ENCODE measurements at regions of chr2 and their contacts with region 1.

Region 1: DNA sequence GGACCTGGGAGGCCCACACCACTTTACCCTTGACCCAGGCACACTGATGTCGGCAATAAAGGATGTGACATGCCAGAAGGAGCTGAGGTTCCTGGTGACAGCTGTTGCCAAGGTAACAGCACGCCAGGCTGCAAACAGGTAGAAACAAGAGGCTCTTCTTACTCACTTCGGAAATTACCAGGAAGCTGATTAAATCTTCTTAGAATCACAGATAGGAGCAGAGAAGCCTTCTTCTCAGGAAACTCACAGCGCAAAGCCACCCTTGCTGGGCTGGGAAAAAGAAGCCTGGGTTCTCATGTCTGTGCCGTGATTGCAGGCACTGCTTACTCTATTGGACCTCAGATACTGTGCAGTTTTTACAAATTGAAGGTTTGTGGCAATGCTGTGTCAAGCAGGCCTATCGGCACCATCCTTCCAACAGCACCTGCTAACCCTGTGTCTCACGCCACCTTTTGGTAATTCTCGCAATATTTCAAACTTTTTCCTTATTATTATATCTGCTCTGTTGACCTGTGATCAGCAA is 61.0 kb upstream of the TAF1B start:
- DNase-seq: peak; percentile 88
- H3K4me3 ChIP-seq: no peak overlapping the region
- H3K27ac ChIP-seq: peak overlapping the region; percentile 79
- H3K4me1 ChIP-seq: peaks cover 28% of the 10 kb centered on the region
- H3K27me3 ChIP-seq: no peaks in the 10 kb centered on the region
- CTCF ChIP-seq: no peak

Region 2: DNA sequence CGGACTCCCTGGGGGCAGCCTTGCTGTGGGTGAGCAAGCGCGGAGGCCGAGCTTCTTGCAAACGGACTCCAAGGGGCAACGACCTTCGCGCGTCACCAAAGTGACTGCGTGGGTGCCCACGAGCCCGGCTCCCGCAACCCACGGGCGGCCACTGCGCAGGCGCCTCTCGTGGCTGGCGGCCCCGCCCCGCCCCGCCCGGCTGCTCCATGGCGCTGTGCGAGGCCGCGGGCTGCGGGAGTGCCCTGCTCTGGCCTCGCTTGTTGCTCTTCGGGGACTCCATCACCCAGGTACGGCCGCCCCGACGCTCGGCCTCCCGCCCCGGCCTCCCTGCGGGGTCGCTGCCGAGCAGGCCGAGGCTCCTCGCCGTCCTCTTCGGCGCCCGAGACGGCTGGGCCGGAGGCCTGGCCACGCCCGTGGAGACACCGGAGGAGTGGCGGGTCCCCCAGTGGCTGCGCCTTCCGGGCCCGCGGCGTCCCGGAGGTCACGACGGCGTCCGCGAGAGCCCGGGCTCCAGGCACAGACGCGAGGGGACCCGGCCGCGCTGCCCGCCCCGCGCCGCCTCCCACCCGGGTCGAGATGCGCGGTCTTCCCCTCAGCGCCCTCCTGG is 307.8 kb before region 1 on chr2 and contains the start of gene IAH1:
- CTCF ChIA-PET with region 1: no interaction called
- dilution Hi-C with region 1: no loop called
- in situ Hi-C with region 1: no loop called
- intact Hi-C with region 1: loop called (anchors 2 kb)
- DNase-seq: peak; percentile 49
- H3K4me3 ChIP-seq: peak within 1 kb of the TSS; percentile 42 to 66 (median 65)
- H3K27ac ChIP-seq: peak within 1 kb of the TSS; percentile 54
- H3K4me1 ChIP-seq: peaks cover 11% of the 10 kb centered on the region
- H3K27me3 ChIP-seq: no peaks in the 10 kb centered on the region
- CTCF ChIP-seq: no peak
- total RNA-seq, gene IAH1: 26.3 to 53.1 TPM

Region 3: DNA sequence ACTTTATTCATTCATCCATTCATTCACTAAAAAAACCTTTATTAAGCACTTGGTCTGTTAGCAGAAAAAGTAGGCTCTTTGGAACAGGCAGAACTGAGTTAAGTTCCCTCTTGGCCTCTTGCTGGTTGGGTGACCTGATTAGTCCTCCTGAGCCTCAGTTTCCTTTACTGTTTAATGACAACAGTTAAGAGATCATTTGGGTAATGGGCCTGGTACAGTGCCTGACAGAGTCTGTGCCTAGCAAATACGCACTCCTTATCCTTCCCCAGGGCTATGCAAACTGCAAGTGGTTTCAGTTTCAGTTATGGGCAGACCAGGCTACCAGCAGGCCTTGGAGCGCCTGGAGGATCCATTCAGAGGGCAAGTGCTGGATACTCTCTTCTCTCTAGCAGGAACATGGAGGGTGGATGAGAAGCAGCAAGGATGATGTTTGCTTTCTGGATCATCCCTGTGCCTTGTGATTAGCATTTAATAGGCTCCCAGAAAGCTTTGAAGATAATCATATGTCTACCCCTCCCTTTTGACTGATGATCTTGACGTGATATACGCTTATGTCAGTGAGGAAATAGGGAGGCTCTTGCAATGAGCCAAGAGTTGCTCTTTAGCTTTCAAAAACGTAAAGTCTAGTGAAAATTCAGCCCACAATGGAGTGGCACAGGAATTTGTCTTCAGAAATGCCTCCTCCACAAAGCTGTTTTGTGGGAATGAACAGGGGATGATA is 48.6 kb after region 1 on chr2:
- CTCF ChIA-PET with region 1: no interaction called
- dilution Hi-C with region 1: no loop called
- in situ Hi-C with region 1: no loop called
- intact Hi-C with region 1: no loop called
- DNase-seq: peak; percentile 37
- H3K4me3 ChIP-seq: no peak overlapping the region
- H3K27ac ChIP-seq: peak overlapping the region; percentile 14
- H3K4me1 ChIP-seq: peaks cover 21% of the 10 kb centered on the region
- H3K27me3 ChIP-seq: no peaks in the 10 kb centered on the region
- CTCF ChIP-seq: no peak

Region 4: GRCh38 chr2:9941196-9941995 is 159.1 kb after region 1 on chr2:
- CTCF ChIA-PET with region 1: no interaction called
- dilution Hi-C with region 1: no loop called
- in situ Hi-C with region 1: no loop called
- intact Hi-C with region 1: no loop called
- DNase-seq: peak; percentile 64
- H3K4me3 ChIP-seq: no peak overlapping the region
- H3K27ac ChIP-seq: peak overlapping the region; percentile 22
- H3K4me1 ChIP-seq: peaks cover 14% of the 10 kb centered on the region
- H3K27me3 ChIP-seq: no peaks in the 10 kb centered on the region
- CTCF ChIP-seq: no peak

Measured in mammary epithelial cell (primary cell).